Mammary epithelial cell (primary cell): ENCODE measurements at regions of chr16 and their contacts with region 1.

Region 1: DNA sequence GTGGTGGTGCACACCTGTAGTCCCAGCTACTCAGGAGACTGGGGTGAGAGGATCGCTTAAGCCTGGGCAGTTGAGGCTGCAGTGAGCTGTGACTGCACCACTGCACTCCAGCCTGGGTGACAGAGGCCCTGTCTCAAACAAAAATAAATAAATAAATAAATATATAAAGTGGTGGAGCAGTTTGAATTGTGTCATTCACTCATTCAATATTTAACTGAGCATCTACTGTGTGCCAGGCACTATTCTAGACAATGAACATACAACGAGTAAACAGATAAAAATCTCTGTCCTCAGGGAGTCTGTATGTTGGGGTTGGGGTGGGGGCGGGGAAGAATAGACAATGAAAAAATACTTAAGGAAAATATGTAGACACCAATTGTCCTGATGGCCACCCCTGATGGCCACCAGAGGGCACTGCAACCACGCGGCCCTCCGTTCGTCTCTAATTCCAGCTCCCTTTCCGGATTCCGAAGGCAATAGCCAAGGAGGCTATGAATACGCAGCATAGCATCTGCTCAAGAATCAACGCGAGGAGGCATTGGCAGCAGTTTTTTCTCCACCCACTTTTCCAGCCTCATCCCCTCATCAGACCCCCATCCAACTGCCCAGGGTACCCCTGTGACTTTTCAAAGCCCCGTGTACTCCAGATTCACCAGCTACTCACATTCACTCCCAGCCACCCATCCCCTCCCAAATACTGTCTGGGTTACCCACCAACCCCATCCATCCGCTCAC is 21.4 kb downstream of the QPRT start:
- DNase-seq: peak; percentile 77
- H3K4me3 ChIP-seq: no peak overlapping the region
- H3K27ac ChIP-seq: no peak overlapping the region
- H3K4me1 ChIP-seq: no peaks in the 10 kb centered on the region
- H3K27me3 ChIP-seq: no peaks in the 10 kb centered on the region
- CTCF ChIP-seq: peak; percentile 94

Region 2: GRCh38 chr16:29815793-29816693 is 115.6 kb after region 1 on chr16 and contains the start of gene PAGR1:
- CTCF ChIA-PET with region 1: no interaction called
- dilution Hi-C with region 1: no loop called
- in situ Hi-C with region 1: no loop called
- intact Hi-C with region 1: loop called (anchors 1 kb)
- DNase-seq: peak; percentile 99
- H3K4me3 ChIP-seq: peak within 1 kb of the TSS; percentile 67 to 81 (median 69)
- H3K27ac ChIP-seq: peak within 1 kb of the TSS; percentile 70
- H3K4me1 ChIP-seq: peaks cover 37% of the 10 kb centered on the region
- H3K27me3 ChIP-seq: no peaks in the 10 kb centered on the region
- CTCF ChIP-seq: peak; percentile 64 to 96
- total RNA-seq, gene PAGR1: 13.7 to 24.9 TPM

Region 3: GRCh38 chr16:29900102-29900887 is 199.9 kb after region 1 on chr16 and contains the start of gene ASPHD1:
- CTCF ChIA-PET with region 1: interaction called, 10 read pairs
- dilution Hi-C with region 1: no loop called
- in situ Hi-C with region 1: no loop called
- intact Hi-C with region 1: no loop called
- DNase-seq: peak; percentile 84
- H3K4me3 ChIP-seq: peak within 1 kb of the TSS; percentile 61 to 70 (median 68)
- H3K27ac ChIP-seq: no peak within 1 kb of the TSS
- H3K4me1 ChIP-seq: peaks cover 21% of the 10 kb centered on the region
- H3K27me3 ChIP-seq: peaks cover 4% of the 10 kb centered on the region
- CTCF ChIP-seq: no peak
- total RNA-seq, gene ASPHD1: 1.5 to 14.7 TPM

Region 4: GRCh38 chr16:30005341-30006094 is 305.1 kb after region 1 on chr16:
- CTCF ChIA-PET with region 1: interaction called, 11 read pairs
- dilution Hi-C with region 1: no loop called
- in situ Hi-C with region 1: loop called in 1 of 2 experiments (anchors 10 kb)
- intact Hi-C with region 1: no loop called
- DNase-seq: no peak
- H3K4me3 ChIP-seq: no peak overlapping the region
- H3K27ac ChIP-seq: no peak overlapping the region
- H3K4me1 ChIP-seq: peaks cover 2% of the 10 kb centered on the region
- H3K27me3 ChIP-seq: peaks cover 6% of the 10 kb centered on the region
- CTCF ChIP-seq: peak; percentile 71 to 76

Region 5: GRCh38 chr16:30018731-30019158 is 318.3 kb after region 1 on chr16:
- CTCF ChIA-PET with region 1: no interaction called
- dilution Hi-C with region 1: loop called (anchors 5 kb)
- in situ Hi-C with region 1: loop called in 1 of 2 experiments (anchors 10 kb)
- intact Hi-C with region 1: loop called (anchors 1 kb)
- DNase-seq: peak; percentile 28
- H3K4me3 ChIP-seq: no peak overlapping the region
- H3K27ac ChIP-seq: no peak overlapping the region
- H3K4me1 ChIP-seq: peaks cover 5% of the 10 kb centered on the region
- H3K27me3 ChIP-seq: no peaks in the 10 kb centered on the region
- CTCF ChIP-seq: no peak